ENCODE measurements at regions of chr19 and their contacts with region 1.

Region 1: GRCh38 chr19:3108775-3109174 is 14.6 kb downstream of the GNA11 start:
- DNase-seq: peak; percentile 67
- H3K4me3 Mint-ChIP-seq: no peak overlapping the region
- H3K27ac Mint-ChIP-seq: peak overlapping the region; percentile 53
- H3K4me1 Mint-ChIP-seq: peaks cover 6% of the 10 kb centered on the region
- H3K27me3 Mint-ChIP-seq: no peaks in the 10 kb centered on the region
- CTCF ChIP-seq: peak; percentile 92

Region 2: DNA sequence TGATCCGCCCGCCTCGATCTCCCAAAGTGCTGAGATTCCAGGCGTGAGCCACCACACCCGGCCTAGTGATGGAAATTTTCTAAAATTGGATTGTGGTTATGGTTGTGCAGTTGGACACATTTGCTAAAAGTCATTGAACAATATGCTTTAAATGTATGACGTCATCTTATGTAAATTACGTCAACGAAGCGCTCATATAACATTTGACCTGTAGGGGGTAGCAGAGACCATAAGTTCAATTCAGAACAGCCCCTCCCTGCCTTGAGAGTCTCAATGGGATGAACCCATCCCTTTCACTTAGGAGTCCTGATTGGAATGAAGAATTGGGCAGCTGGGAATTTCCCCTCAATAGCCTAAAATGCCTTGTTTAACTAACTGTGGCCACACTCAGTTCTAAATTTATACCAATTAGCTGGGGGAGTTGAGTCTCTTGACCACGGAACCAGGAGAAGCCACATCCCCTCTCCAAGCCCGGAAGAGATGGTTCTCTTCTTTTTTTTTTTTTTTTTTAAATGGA is 146.7 kb before region 1 on chr19:
- CTCF ChIA-PET with region 1: interaction called, 23 read pairs
- POLR2A ChIA-PET with region 1: no interaction called
- intact Hi-C with region 1: loop called (anchors 1 kb)
- DNase-seq: peak; percentile 72
- H3K4me3 Mint-ChIP-seq: no peak overlapping the region
- H3K27ac Mint-ChIP-seq: no peak overlapping the region
- H3K4me1 Mint-ChIP-seq: no peaks in the 10 kb centered on the region
- H3K27me3 Mint-ChIP-seq: no peaks in the 10 kb centered on the region
- CTCF ChIP-seq: peak; percentile 87

Region 3: GRCh38 chr19:2997720-2998119 is 111.1 kb before region 1 on chr19:
- CTCF ChIA-PET with region 1: no interaction called
- POLR2A ChIA-PET with region 1: no interaction called
- intact Hi-C with region 1: no loop called
- DNase-seq: no peak
- H3K4me3 Mint-ChIP-seq: no peak overlapping the region
- H3K27ac Mint-ChIP-seq: no peak overlapping the region
- H3K4me1 Mint-ChIP-seq: peaks cover 12% of the 10 kb centered on the region
- H3K27me3 Mint-ChIP-seq: no peaks in the 10 kb centered on the region
- CTCF ChIP-seq: no peak

Region 4: GRCh38 chr19:3094601-3095437 is 14.0 kb before region 1 on chr19:
- CTCF ChIA-PET with region 1: interaction called, 18 read pairs
- POLR2A ChIA-PET with region 1: interaction called, 3 read pairs
- intact Hi-C with region 1: loop called (anchors 1 kb)
- DNase-seq: peak; percentile 25
- H3K4me3 Mint-ChIP-seq: peak overlapping the region; percentile 93
- H3K27ac Mint-ChIP-seq: peak overlapping the region; percentile 88
- H3K4me1 Mint-ChIP-seq: peaks cover 24% of the 10 kb centered on the region
- H3K27me3 Mint-ChIP-seq: no peaks in the 10 kb centered on the region
- CTCF ChIP-seq: no peak

Region 5: DNA sequence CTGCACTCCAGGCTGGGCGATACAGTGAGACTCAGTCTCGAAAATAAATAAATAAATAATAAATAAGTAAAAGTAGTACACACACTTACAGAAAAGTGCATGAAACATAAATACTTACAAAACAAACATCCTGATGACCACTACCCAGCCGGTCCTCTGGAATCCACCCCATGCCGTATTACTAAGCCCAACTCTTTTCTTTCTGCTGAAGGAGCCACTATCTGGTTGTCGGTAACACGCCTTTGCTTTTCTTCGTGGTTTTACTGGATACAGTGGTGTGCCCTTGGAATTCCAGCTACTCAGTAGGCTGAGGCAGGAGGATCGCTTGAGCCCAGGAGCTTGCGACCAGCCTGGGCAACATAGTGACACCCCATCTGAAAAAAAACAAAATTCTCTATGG is 155.1 kb after region 1 on chr19:
- CTCF ChIA-PET with region 1: no interaction called
- POLR2A ChIA-PET with region 1: no interaction called
- intact Hi-C with region 1: no loop called
- DNase-seq: no peak
- H3K4me3 Mint-ChIP-seq: no peak overlapping the region
- H3K27ac Mint-ChIP-seq: no peak overlapping the region
- H3K4me1 Mint-ChIP-seq: no peaks in the 10 kb centered on the region
- H3K27me3 Mint-ChIP-seq: peaks cover 23% of the 10 kb centered on the region
- CTCF ChIP-seq: no peak

Measured in MCF 10A (cell line).